ENCODE measurements at regions of chr14 and their contacts with region 1.

Region 1: GRCh38 chr14:70714055-70714621 is 72.4 kb downstream of the TTC9 start:
- DNase-seq: peak; percentile 47 to 61 (median 52)
- ATAC-seq: peak; percentile 33
- H3K4me3 ChIP-seq: no peak overlapping the region
- H3K27ac ChIP-seq: no peak overlapping the region
- H3K4me1 ChIP-seq: peaks cover 28% of the 10 kb centered on the region
- H3K27me3 ChIP-seq: no peaks in the 10 kb centered on the region
- CTCF ChIP-seq: peak; percentile 17 to 82 (median 59)
- POLR2A ChIP-seq: no peak

Region 2: GRCh38 chr14:70489579-70490175 is 224.5 kb before region 1 on chr14:
- intact Hi-C with region 1: no loop called
- DNase-seq: no peak
- ATAC-seq: no peak
- H3K4me3 ChIP-seq: no peak overlapping the region
- H3K27ac ChIP-seq: no peak overlapping the region
- H3K4me1 ChIP-seq: no peaks in the 10 kb centered on the region
- H3K27me3 ChIP-seq: no peaks in the 10 kb centered on the region
- CTCF ChIP-seq: no peak
- POLR2A ChIP-seq: no peak

Region 3: GRCh38 chr14:70622111-70622712 is 91.9 kb before region 1 on chr14:
- intact Hi-C with region 1: loop called (anchors 10 kb)
- DNase-seq: peak; percentile 42 to 70 (median 60)
- ATAC-seq: peak; percentile 80
- H3K4me3 ChIP-seq: no peak overlapping the region
- H3K27ac ChIP-seq: no peak overlapping the region
- H3K4me1 ChIP-seq: no peaks in the 10 kb centered on the region
- H3K27me3 ChIP-seq: no peaks in the 10 kb centered on the region
- CTCF ChIP-seq: peak; percentile 36 to 91 (median 72)
- POLR2A ChIP-seq: no peak

Measured in body of pancreas (tissue), 4 donors.